Gastrocnemius medialis (tissue), 4 donors: ENCODE measurements at regions of chr7 and their contacts with region 1.

Region 1: GRCh38 chr7:7640221-7641128 is at the start of gene UMAD1:
- DNase-seq: peak; percentile 99
- ATAC-seq: peak; percentile 98 to 99
- H3K4me3 ChIP-seq: peak within 1 kb of the TSS; percentile 81 to 97 (median 90)
- H3K27ac ChIP-seq: peak within 1 kb of the TSS; percentile 86 to 91 (median 90)
- H3K4me1 ChIP-seq: peaks cover 12 to 16% of the 10 kb centered on the region in 2 donors
- H3K27me3 ChIP-seq: no peaks in the 10 kb centered on the region
- CTCF ChIP-seq: no peak
- POLR2A ChIP-seq: peak; percentile 74 to 80
- total RNA-seq, gene UMAD1: 10.2 to 16.0 (median 11.1) TPM

Region 2: GRCh38 chr7:7182156-7183060 is 458.1 kb before region 1 on chr7 and contains the start of gene C1GALT1:
- in situ Hi-C with region 1: no loop called
- intact Hi-C with region 1: loop called (anchors 5 kb)
- DNase-seq: peak; percentile 95
- ATAC-seq: peak; percentile 90 to 92
- H3K4me3 ChIP-seq: peak within 1 kb of the TSS; percentile 80 to 98 (median 88)
- H3K27ac ChIP-seq: peak within 1 kb of the TSS; percentile 94 to 99 (median 97)
- H3K4me1 ChIP-seq: peaks cover 24 to 29% of the 10 kb centered on the region in 2 donors
- H3K27me3 ChIP-seq: no peaks in the 10 kb centered on the region
- CTCF ChIP-seq: peak in 3 of 5 experiments; percentile 12 to 48 (median 25)
- POLR2A ChIP-seq: peak; percentile 82 to 90
- total RNA-seq, gene C1GALT1: 16.1 to 40.8 (median 27.5) TPM

Region 3: DNA sequence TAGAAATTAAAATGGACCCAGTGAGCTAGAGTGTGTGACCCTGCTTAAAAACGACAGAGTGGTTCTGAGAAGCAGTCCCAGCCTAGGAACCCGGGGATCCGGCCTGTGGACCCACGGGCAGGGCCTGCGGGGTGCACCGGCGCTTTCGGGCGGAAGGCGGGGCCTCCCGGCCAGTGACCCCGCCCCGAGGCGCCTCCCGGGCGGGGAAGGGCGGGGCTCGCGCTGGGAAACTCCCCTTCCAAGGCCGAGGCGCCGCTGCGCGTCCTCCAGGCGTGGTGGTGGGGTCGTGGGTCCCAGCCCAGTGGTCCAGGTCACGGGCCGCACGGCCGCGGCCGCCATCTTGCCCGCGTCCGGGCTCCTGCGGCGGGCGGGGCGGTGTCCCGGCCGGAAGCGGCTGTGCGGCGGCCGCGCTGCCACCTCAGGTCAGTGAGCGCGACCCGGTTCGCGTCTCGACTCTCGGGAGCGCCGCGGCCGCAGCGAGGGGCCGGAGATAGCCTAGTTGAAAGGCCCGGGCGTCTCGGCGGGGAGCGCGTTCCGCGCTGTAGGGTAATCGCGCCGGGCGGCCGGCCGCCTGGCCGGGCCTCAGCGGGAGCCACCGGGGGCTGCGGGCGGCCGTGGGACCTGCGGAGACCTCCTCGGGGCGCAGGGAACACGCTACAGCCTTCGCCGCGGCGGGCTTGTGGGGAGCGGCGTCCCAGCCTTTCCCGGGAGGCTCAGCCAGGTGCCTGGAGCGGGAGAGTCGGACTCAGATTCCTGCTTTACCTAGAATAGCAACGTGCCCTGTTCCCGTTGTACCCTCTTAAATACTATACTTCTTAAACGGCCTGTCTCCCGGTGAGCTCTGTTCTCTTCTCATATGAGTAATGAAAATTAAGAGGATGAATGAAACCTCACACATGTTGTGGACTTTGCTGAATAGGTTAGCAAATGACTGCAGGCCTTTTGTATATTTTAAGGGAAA is 73.5 kb before region 1 on chr7 and contains the start of gene MIOS:
- in situ Hi-C with region 1: no loop called
- intact Hi-C with region 1: loop called (anchors 2 kb)
- DNase-seq: peak; percentile 89 to 90
- ATAC-seq: peak; percentile 66 to 67
- H3K4me3 ChIP-seq: peak within 1 kb of the TSS; percentile 67 to 85 (median 80)
- H3K27ac ChIP-seq: peak within 1 kb of the TSS; percentile 90 to 98 (median 96)
- H3K4me1 ChIP-seq: peaks cover 33 to 76% of the 10 kb centered on the region in 2 donors
- H3K27me3 ChIP-seq: no peaks in the 10 kb centered on the region
- CTCF ChIP-seq: peak in 1 of 5 experiments; percentile 18
- POLR2A ChIP-seq: peak; percentile 82 to 92
- total RNA-seq, gene MIOS: 68.4 to 336 (median 280) TPM

Region 4: GRCh38 chr7:7581531-7582179 is 58.8 kb before region 1 on chr7:
- in situ Hi-C with region 1: loop called in 1 of 4 experiments (anchors 10 kb)
- intact Hi-C with region 1: no loop called
- DNase-seq: no peak
- ATAC-seq: no peak
- H3K4me3 ChIP-seq: no peak overlapping the region
- H3K27ac ChIP-seq: no peak overlapping the region
- H3K4me1 ChIP-seq: no peaks in the 10 kb centered on the region
- H3K27me3 ChIP-seq: no peaks in the 10 kb centered on the region
- CTCF ChIP-seq: no peak
- POLR2A ChIP-seq: no peak

Region 5: DNA sequence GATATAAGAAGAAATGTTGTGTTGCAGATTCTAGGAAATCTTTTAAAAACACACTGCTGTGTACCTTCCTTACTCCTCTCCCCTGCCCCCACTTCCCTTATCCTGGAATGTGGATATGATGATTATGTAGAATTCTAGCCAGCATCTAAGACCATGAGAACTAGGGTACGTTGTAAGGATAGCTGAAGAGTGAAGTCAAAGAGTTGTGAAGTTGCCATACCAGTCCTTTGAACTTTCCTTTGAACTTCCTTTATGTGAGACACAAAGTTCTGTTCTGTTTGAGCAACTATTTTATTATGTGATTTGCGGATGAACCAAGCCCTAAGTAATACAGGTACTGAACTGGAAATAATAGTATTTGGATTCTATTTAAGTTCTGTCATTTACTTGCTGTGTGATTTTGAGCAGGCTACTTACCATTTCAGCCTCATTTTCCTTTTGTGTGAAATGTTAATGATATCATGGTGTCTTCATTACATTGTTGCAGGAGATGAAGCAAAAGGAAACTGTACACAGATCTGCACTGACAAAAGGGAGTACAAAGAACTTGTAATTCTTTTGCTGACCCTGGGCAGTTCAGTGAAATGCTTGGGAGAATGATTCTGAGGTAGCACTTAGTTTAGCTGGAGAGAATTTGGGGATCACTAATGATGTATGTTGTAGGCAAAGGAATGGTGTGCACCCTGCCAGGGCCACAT is 46.5 kb after region 1 on chr7:
- in situ Hi-C with region 1: no loop called
- intact Hi-C with region 1: loop called (anchors 5 kb)
- DNase-seq: no peak
- ATAC-seq: no peak
- H3K4me3 ChIP-seq: no peak overlapping the region
- H3K27ac ChIP-seq: peak overlapping the region; percentile 77 to 88 (median 78)
- H3K4me1 ChIP-seq: peaks cover 21 to 44% of the 10 kb centered on the region in 2 donors
- H3K27me3 ChIP-seq: no peaks in the 10 kb centered on the region
- CTCF ChIP-seq: no peak
- POLR2A ChIP-seq: no peak

Region 6: DNA sequence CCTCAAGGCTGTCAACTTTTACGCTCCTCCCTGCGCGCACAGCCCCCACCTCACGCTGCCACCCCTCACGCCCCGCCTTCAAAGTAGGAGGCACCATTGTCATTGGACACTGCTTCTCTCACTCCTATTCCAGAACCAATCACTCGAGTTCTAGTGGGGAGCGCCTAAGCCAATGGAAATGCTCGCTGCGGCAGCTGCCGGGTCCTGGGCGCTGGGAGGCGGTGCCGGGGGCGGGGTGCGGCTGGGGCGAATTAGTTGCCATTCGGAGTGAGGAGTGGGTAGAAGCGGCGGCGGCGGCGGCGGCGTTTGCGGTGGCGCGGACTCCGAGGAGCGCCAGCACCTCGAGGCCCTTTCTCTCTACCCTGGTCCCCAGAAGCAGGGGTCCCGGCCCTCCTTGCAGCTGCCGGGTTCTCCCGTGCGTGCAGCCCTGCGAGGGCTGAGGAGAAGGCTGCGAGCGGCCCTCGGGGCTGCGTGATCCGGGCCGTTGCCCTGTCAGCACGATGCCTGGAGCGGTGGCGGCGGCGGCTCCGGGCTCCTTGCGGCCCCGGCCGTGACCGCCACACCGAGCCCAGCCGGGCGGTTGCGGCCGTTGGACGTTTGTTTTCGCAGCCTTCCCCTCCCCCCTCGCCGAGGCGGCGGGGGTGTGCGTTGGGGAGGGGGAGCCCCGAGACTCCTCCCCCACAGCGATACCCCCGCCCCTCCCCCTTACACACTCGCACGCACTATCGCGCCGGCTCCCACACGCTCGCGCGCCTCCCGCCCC is 328.2 kb after region 1 on chr7 and contains the start of gene GLCCI1:
- in situ Hi-C with region 1: loop called in 1 of 4 experiments (anchors 25 kb)
- intact Hi-C with region 1: loop called (anchors 5 kb)
- DNase-seq: peak; percentile 97
- ATAC-seq: peak; percentile 96 to 97
- H3K4me3 ChIP-seq: peak within 1 kb of the TSS; percentile 83 to 93 (median 86)
- H3K27ac ChIP-seq: peak within 1 kb of the TSS; percentile 91 to 98 (median 93)
- H3K4me1 ChIP-seq: peaks cover 13 to 22% of the 10 kb centered on the region in 2 donors
- H3K27me3 ChIP-seq: no peaks in the 10 kb centered on the region
- CTCF ChIP-seq: no peak
- POLR2A ChIP-seq: peak; percentile 79 to 95
- total RNA-seq, gene GLCCI1: 1.2 to 6.1 (median 2.6) TPM